Left cardiac atrium (tissue), 4 donors: ENCODE measurements at regions of chr10 and their contacts with region 1.

Region 1: DNA sequence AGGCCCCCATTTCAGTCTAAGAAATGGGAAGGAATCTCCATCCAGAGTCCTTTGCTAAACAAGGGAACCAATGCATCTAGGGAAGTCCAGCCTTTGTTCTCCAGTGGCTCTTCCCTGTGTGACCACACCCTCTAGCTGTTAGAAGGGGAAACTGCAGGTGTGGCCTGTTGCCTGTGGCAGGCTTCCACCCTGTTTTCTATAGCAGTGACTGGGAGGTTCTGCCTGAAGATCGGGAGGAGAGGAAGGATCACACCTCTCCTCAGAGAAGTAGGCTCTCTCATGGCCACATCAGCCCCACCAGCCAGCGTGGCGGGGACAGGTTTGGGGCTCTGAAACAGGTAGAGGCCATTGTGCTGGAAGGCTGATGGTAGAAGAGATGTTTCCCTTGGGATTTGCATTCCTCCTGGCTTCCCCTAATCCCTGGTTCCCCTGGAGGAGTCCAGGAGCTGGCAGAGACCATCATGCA is 47.7 kb upstream of the TRIM8 start:
- DNase-seq: no peak
- ATAC-seq: peak; percentile 24 to 58

Region 2: DNA sequence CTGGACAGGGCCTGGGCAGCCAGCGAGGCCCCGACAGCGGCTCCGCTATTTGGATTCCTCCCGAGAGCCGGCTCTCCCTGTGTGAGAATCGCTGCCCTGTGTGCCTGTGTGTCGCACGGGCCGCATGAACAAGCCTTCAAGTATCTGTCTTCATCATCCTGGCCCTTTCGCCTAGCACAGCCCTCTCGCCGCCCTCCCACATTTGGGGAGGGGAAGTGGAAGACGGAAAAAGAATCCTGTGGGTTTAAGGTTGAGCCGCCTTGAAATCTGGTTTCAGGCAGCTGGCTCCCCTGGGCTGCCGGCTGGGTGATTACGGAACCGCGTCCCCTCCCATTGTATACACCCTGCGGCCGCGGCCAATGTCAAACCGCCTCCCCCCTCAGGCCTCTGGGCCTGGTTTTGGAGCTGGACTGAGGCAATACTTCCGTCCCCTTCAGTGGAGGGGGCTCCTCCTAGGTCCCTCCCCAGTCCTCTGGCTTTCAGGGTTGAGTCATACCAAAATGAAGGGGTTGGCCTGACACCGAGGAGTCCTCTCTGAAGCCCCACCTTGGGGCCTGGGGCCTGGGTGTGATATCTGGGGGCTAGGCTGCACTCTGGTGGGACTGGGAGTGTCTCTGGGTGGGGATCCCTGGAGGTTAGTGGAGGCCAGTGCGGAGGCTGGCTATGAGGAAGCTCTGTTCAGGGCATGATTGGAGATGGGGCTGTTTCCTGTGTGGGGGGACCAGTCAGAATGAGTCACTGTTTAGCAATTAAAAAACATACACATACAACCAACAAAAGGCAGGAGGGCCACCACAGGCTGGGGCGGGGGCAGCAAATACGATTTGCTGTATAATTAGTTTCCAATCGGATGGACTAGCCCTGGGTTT is 49.4 kb after region 1 on chr10:
- intact Hi-C with region 1: loop called (anchors 5 kb)
- DNase-seq: peak; percentile 92
- ATAC-seq: peak; percentile 28 to 52

Region 3: DNA sequence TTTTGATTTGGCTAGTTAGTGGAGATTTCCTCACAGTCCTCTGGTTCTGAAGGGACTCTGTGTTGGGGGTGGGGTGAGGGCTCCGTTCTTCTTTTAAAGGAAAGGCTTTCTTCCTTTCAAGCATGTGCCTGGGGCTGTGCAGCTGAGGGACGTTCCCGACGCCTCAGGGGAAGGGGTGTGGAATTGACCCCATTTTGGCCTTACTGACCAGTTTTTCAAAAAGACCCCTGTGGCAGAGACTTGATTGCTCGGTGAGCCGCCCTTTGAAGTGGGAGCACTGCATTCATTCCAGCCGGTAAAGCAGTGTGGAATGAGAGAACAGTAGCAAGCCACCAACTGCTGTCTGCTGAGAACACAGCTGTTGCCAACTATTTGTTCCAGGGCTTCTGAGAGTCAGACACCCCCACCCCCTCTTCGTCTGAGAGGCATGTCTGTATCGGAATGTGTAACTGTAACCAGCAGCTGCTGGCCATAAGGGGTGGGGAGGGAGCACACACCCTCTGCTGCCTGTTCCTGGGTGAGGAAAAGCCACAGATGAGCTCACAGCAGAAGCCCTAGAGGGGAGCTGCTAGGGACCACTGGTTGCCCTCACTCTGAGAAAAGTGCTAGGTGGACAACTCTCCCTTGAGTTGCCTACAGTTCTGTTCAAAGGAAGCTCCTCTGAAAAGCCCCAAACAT is 180.4 kb after region 1 on chr10:
- intact Hi-C with region 1: no loop called
- DNase-seq: peak; percentile 86
- ATAC-seq: peak; percentile 78